ENCODE measurements at regions of chr20 and their contacts with region 1.

Region 1: DNA sequence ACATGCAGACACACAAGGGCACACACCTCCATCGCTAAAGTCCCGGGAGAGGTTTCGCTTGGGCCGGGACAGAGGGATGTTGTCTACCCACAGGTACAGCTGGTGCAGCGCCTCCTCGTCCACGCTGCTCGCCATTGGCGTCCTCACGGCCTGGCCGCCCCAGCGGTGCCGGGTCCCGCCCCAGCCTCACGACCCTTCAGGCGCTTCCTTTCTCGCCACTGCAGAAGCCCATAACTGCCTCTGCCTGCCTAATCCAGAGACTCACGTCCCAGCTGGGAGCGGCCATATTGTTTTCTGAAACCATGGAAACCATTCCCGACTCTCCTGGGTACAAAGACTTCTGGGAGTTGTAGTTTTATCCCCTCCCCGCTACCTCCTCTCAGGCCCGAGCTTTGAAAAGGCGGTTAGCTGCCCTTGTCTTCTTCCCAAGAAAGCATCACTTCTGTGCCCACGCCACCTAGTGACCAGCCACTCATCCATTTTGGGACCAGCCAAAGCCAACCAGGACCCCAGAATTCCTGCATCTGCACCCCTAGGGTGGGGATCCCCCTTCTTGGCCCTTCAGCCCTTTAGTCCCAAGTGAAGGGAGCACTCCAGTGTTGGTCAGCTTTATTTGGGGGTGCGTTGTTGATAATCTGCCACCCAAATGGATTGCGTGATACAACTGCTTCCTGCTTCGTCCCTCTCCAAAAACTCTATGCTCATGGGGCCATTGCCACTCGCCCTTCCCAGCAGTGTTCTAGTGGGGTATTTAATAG is at the start of gene SPEF1:
- DNase-seq: peak; percentile 71
- H3K4me3 ChIP-seq: peak within 1 kb of the TSS; percentile 56
- H3K27ac ChIP-seq: peak within 1 kb of the TSS; percentile 11
- H3K27me3 ChIP-seq: peaks cover 7% of the 10 kb centered on the region
- CTCF ChIP-seq: peak; percentile 50
- polyA plus RNA-seq, gene SPEF1: 0.12 TPM in 2 replicates

Region 2: GRCh38 chr20:3679749-3680700 is 101.3 kb before region 1 on chr20:
- CTCF ChIA-PET with region 1: interaction called, 11 read pairs
- POLR2A ChIA-PET with region 1: interaction called, 3 read pairs
- DNase-seq: peak; percentile 27
- H3K4me3 ChIP-seq: peak overlapping the region; percentile 70
- H3K27ac ChIP-seq: peak overlapping the region; percentile 57
- H3K27me3 ChIP-seq: no peaks in the 10 kb centered on the region
- CTCF ChIP-seq: no peak

Region 3: DNA sequence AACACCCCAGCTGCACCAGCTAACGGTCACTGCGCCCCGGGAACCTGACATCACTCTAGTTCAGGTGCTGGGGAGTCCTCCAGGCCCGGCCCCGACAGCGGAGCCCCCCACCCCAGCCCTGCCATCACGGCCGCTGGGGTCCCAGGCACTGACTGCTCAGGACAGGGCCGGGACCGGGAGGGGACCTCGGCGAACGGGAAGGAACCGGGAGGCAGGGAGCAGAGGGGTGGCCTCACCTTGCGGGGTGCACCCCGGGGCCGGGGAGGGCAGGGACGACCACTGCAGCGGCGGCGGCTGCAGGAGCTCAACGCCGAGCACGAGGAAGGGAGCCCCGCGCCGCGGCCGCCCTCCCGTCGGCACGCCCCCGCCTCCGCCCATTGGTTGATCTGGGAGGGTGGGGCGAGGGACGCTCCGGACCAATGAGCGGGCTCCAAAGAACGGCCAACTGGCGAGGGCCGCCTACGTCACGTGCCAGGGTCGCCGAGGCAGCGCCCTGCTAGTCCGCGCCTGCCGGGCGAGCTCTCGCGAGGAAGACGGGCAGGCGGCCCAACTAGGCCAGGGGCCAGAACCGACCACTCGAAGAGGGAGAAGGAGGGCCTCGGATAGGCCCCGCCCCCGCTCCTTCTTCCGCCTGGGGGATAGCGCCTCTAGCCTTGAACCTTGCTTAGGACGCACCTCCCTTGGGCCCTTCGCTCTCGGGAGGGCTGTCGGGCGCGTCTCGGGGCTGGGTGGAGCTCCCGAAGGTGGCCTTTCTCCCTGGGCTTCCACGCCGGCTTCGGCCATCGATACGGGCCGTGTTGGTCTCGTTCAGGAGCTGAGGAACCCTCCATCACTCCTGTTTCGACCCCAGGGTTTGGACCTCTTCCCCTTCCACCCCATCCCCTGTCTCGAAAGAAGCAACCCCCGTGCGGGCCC is 13.6 kb before region 1 on chr20 and contains the start of gene ADISSP:
- CTCF ChIA-PET with region 1: interaction called, 18 read pairs
- POLR2A ChIA-PET with region 1: interaction called, 14 read pairs
- DNase-seq: peak; percentile 95
- H3K4me3 ChIP-seq: peak within 1 kb of the TSS; percentile 84
- H3K27ac ChIP-seq: peak within 1 kb of the TSS; percentile 90
- H3K27me3 ChIP-seq: no peaks in the 10 kb centered on the region
- CTCF ChIP-seq: peak; percentile 28; the same call in 1 of the 2 replicates
- polyA plus RNA-seq, gene ADISSP: 22.6 and 29.2 TPM in 2 replicates

Region 4: DNA sequence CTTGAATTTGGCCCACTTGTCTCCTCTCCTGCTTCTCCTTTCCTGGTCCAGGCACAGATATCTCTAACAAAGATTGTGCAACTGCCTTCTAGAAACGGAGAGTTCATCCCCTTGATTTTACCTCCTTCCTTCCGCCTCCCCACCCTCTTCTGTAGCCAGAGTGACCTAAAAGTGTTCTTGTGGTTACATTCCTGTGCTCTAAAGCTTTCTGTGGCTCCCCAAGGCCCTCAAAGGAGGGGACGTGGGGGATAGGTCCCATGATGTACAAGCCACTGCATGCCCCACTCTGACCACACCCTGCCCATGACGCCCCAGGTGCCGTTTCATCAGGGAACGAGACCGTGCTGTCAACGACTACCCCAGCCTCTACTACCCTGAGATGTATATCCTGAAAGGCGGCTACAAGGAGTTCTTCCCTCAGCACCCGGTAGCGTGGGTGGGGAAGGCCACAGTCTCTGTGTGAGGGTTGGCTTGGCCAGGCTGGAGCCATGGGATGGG is 23.0 kb after region 1 on chr20:
- CTCF ChIA-PET with region 1: no interaction called
- POLR2A ChIA-PET with region 1: no interaction called
- DNase-seq: no peak
- H3K4me3 ChIP-seq: no peak overlapping the region
- H3K27ac ChIP-seq: peak overlapping the region; percentile 57
- H3K27me3 ChIP-seq: no peaks in the 10 kb centered on the region
- CTCF ChIP-seq: no peak

Region 5: GRCh38 chr20:4026093-4026601 is 244.8 kb after region 1 on chr20:
- CTCF ChIA-PET with region 1: no interaction called
- POLR2A ChIA-PET with region 1: interaction called, 12 read pairs
- DNase-seq: peak; percentile 68
- H3K4me3 ChIP-seq: no peak overlapping the region
- H3K27ac ChIP-seq: peak overlapping the region; percentile 59
- H3K27me3 ChIP-seq: no peaks in the 10 kb centered on the region
- CTCF ChIP-seq: peak; percentile 69